ENCODE measurements at regions of chr4 and their contacts with region 1.

Region 1: DNA sequence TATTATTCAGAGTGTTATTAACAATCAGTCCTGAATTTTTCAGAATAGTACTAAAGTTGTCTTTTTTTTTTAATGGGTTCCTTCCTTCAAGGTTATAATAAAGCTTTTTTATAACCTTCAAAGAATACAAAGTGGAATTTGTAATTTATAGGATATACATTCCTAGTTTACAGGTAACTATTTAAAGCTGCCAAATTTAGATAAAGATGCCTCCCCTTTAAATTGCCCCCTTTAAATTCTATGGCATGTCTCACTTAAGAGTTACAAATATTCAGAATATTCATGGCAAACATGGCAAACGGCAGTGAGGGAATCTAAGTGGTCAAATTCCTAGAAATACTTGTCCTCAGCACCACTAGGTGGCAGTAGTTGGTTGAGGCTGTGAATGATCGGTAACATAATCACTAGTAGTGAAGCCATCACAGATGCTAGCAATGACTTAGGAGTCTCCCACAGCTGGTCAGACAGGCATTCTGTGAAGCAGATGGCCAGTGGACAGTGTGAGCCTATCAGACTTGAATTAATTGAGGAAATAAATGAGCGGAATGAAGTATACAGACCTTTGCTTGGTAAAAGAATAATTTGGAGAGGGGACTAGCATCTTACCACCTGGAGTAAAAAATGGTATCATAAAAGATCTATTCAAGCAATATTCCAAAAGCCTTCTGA is 86.4 kb downstream of the CBR4 start:
- DNase-seq: no peak

Region 2: DNA sequence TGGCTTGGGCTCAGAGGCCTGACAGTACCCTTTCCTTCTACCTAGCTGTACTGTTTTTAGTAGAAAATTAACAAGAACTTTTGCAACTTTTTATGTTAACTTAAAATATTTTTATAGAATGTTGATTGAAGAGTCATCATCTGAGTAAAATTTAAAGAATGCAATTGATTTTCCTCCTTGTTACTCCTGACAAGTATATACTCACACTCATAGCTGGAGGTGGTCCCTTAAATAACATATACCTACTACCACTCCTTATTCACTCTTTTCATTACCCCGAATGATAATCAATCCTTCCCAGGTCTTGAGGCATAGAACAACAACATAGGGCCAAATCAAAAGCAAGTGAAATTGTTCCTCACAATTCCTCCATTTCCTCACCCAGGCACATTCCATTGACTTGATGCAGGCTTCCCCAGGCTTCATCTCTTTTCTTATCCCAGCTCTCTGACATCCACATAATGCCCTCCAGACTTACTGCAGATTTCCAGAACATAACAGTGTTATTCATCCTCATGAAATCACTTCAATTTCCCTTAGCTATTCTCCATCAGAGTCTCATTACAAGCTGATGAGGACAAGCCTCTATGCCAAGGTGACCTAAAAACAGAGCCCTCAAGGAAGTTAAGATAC is 904.5 kb before region 1 on chr4:
- intact Hi-C with region 1: no loop called
- DNase-seq: no peak

Region 3: GRCh38 chr4:168177546-168178149 is 746.0 kb before region 1 on chr4:
- intact Hi-C with region 1: loop called (anchors 10 kb)
- DNase-seq: no peak

Region 4: DNA sequence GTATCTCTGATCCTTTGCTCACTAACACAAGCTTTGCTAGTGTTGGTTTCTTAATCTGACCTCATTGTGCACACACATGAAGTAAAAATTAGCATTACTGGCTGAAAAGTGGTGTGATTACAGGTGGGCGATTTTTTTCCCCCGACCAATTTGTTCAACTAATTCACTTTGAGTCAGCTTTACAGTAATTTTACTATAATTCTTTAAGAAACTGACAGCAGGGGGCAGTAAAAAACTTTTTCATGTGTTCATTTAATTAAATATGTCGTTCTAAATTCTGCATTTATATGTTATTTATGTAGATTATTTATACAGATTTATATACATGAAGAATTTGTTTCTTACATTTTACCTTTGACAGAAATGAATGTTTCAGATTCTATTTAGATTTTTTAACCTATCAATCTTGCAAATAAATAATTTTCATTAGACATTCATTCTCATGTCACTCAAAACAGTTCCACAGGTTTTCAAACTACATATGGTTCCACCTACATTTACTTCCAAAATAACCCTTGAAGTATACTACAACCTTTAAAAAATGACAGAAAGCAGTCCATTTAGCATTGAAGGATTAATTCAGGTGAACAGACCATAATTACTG is 409.3 kb before region 1 on chr4:
- intact Hi-C with region 1: loop called (anchors 5 kb)
- DNase-seq: no peak

Region 5: GRCh38 chr4:169010125-169011023 is 86.7 kb after region 1 on chr4 and contains the start of gene CBR4:
- intact Hi-C with region 1: loop called (anchors 5 kb)
- DNase-seq: peak; percentile 99
- total RNA-seq, gene CBR4: 21.3 TPM

Region 6: GRCh38 chr4:169311643-169312365 is 388.1 kb after region 1 on chr4:
- intact Hi-C with region 1: loop called (anchors 5 kb)
- DNase-seq: no peak

Region 7: GRCh38 chr4:169485791-169486742 is 562.4 kb after region 1 on chr4:
- intact Hi-C with region 1: loop called (anchors 5 kb)
- DNase-seq: no peak

Region 8: DNA sequence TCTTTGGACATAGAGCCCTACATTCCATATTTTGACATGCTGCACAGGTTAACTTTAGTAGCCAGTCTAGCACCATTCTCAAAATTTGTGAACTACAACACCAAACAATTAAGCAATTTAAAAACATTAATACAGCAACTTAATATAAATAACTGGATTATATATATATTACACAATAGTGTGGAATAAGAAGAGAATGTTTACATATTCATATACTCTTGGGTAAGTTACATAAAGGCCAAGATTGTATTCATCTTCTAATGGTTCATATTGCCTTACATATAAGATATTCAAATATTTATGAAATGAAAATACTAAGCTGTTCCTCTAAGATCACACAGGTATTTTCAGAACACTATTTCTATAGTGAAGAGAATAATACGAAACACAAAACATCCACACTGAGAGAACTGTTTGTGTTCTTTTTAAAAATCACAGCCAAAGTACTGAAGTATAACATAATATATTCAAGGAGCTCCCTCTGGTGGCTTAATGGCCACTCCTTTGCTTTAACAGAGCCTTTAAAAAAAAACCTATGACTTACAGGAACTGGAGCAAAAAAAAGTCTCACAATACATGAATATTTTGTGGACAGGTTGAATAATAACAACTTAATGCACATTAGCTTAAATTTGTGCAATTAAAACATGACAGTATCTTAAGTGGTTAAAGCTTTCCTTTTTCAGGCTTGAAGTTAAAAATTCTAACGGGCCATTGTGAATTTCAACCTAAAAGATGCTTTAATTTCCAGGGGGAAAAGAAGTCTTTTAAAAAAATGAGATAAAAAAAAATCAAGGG is 642.6 kb after region 1 on chr4:
- intact Hi-C with region 1: loop called (anchors 5 kb)
- DNase-seq: no peak

Measured in cardiac septum (tissue), 1 donor.